Activated T-helper 2 cell treated with anti-CD3 and anti-CD28 coated beads, Interferon-gamma antibody, Interleukin-2, Interleukin-4, amounts not matched to agents 10 μg/mL and 5 μg/mL and 100 μg/mL, durations not matched to agents 14 hours and 24 hours and 36 hours (primary cell): ENCODE measurements at regions of chr12 and their contacts with region 1.

Region 1: DNA sequence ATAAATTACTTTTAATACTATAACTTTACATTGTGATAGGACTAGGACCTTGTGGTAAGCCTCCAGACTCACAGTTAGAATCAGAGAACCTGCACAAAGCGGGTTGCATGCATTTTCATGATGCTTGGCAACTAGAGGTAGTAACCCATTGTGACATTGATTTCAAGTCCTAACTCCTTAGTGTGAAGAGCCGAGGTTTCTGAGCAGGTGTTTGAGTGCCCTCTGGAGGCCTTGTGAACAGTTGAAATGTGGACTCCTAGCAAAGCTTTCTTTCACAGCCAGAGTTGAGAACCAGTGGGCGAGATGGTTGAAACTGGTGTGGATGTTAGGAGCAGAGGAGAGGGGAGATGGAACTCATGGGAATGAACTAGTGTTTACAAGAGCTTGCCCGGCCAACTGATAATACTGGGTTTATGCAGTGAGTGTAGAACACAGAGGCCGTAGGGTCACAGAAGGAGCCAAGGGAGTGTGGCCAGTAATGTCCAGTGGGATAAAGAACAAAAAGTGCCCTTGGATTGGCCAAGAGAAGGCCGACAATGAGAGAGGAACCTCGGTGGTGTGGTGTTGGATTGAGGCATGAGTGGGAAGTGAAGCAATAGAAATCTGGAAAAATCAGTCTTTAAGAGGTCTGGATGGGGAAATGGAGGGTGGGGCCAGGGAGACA is 10.9 kb downstream of the ZNF664 start:
- DNase-seq: peak; percentile 30
- H3K4me3 Mint-ChIP-seq: no peak overlapping the region
- H3K27ac Mint-ChIP-seq: no peak overlapping the region
- H3K4me1 Mint-ChIP-seq: peaks cover 12% of the 10 kb centered on the region
- H3K27me3 Mint-ChIP-seq: no peaks in the 10 kb centered on the region

Region 2: DNA sequence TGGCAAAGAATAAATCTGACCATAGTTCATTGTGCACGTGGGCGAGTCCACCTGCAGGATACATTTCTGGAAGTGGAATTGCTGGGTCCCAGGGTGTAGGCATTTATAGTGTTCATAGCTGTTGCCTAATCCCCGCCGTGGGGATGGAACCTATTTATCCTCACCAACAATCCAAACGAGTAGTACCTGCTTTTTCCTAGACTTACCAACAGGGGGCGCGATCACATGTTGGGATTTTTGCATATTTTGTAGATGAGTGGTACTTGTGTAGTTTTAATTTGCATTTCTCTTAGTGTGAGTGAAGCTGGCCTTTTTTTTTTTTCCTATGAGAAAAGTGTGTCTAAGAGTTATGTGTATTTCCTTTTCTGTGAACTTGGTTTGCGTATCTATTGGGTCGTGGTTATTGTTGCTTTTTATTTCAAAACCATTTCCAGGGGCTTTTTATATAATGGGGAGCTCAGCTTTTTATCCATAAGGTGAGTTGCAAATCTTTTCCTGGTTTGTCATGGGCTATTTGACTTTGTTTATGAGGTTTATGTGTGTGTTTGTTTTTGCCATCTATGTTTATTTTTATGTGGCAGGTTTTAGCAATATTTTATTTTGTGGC is 78.5 kb before region 1 on chr12:
- intact Hi-C with region 1: loop called (anchors 1 kb)
- DNase-seq: peak; percentile 51
- H3K4me3 Mint-ChIP-seq: no peak overlapping the region
- H3K27ac Mint-ChIP-seq: no peak overlapping the region
- H3K4me1 Mint-ChIP-seq: peaks cover 5% of the 10 kb centered on the region
- H3K27me3 Mint-ChIP-seq: no peaks in the 10 kb centered on the region